ENCODE measurements at regions of chr19 and their contacts with region 1.

Region 1: DNA sequence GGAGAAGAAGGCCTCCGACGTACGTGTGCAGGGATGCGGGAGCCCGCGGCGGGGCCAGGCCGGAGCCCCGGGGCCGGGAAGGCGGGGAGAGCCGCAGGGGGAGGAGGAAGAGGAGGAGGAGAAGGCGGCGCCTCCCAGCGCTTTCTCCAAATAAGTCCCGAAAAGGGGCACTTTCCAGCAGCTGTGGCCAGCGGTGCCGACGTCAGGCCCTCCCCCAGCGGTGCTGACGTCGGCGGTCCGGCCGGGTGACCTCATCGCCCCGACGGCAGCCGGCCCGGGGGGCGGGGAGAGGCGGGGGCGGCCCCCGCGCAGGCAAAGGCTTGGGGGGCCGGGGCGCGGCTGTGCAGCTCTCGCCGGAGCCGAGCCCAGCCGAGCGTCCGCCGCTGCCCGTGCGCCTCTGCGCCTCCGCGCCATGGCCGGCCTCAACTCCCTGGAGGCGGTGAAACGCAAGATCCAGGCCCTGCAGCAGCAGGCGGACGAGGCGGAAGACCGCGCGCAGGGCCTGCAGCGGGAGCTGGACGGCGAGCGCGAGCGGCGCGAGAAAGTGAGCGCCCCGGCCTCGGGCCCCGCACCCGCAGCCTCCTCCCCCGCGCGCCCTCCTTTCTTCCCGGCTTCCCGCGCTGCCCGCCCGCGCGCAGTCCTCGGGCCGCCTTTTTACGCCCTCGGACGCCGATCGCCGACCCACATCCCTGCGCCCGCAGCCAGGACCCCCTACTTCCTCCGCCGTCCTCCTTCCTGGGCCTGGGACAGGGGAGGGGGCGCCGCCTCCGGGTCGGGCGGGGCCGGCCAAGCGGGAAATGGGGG is at the start of gene TPM4:
- DNase-seq: peak; percentile 89
- ATAC-seq: peak; percentile 76
- H3K4me3 Mint-ChIP-seq: peak within 1 kb of the TSS; percentile 85
- H3K27ac Mint-ChIP-seq: peak within 1 kb of the TSS; percentile 98
- H3K4me1 Mint-ChIP-seq: peaks cover 56% of the 10 kb centered on the region
- H3K27me3 Mint-ChIP-seq: no peaks in the 10 kb centered on the region
- CTCF ChIP-seq: no peak
- total RNA-seq, gene TPM4: 302 to 327 TPM (median 323 TPM) in 3 replicates

Region 2: GRCh38 chr19:16018801-16019551 is 57.4 kb before region 1 on chr19:
- CTCF ChIA-PET with region 1: no interaction called
- POLR2A ChIA-PET with region 1: no interaction called
- DNase-seq: no peak
- ATAC-seq: no peak
- H3K4me3 Mint-ChIP-seq: no peak overlapping the region
- H3K27ac Mint-ChIP-seq: no peak overlapping the region
- H3K4me1 Mint-ChIP-seq: no peaks in the 10 kb centered on the region
- H3K27me3 Mint-ChIP-seq: no peaks in the 10 kb centered on the region
- CTCF ChIP-seq: no peak

Region 3: DNA sequence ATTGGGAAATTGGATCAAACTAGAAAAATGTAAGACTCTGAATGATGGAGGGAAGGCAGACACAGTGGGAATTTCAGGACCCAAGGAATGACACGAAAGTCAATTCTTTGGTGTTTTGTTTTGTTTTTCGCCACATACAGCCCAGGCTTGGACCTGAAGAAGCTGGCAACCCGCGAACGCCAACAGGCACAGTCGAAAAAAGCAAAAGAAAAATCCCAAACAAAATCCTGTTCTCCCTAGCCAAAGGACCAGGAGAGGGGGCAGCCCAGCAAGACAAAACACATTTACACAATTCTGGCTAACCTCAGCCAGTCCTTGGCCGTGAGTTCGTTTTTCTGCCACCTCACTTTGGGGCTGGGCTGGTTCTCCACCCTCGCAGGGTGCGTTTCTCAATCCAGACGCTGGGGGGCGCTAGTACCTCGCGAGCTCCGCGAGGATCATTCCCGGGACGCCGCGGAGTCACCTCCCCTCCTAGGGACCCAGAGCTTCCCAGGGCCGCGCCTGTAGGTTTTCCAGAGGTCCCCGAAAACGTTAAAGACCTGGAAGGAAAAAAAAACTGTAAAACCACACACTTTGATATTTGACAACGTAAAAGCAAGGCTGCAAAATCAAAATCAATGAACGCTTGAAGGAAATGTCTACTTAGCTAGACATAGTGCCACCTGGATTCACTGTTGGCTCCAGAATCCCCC is 34.9 kb before region 1 on chr19:
- CTCF ChIA-PET with region 1: interaction called, 19 read pairs
- POLR2A ChIA-PET with region 1: interaction called, 9 read pairs
- DNase-seq: peak; percentile 93
- ATAC-seq: peak; percentile 96
- H3K4me3 Mint-ChIP-seq: peak overlapping the region; percentile 38
- H3K27ac Mint-ChIP-seq: no peak overlapping the region
- H3K4me1 Mint-ChIP-seq: 0 out of 2 replicates have a peak, but pooled peaks cover 3% of the 10 kb centered on the region
- H3K27me3 Mint-ChIP-seq: peaks cover 8% of the 10 kb centered on the region
- CTCF ChIP-seq: peak; percentile 97

Region 4: GRCh38 chr19:16088351-16089009 is 12.1 kb after region 1 on chr19:
- CTCF ChIA-PET with region 1: no interaction called
- POLR2A ChIA-PET with region 1: interaction called, 10 read pairs
- DNase-seq: no peak
- ATAC-seq: no peak
- H3K4me3 Mint-ChIP-seq: no peak overlapping the region
- H3K27ac Mint-ChIP-seq: peak overlapping the region; percentile 49; the same call in 1 of the 2 replicates
- H3K4me1 Mint-ChIP-seq: no peaks in the 10 kb centered on the region
- H3K27me3 Mint-ChIP-seq: no peaks in the 10 kb centered on the region
- CTCF ChIP-seq: no peak

Region 5: GRCh38 chr19:16111160-16111908 is 35.0 kb after region 1 on chr19 and contains the start of gene RAB8A:
- CTCF ChIA-PET with region 1: interaction called, 10 read pairs
- POLR2A ChIA-PET with region 1: interaction called, 17 read pairs
- DNase-seq: peak; percentile 97
- ATAC-seq: peak; percentile 95
- H3K4me3 Mint-ChIP-seq: peak within 1 kb of the TSS; percentile 96
- H3K27ac Mint-ChIP-seq: peak within 1 kb of the TSS; percentile 96
- H3K4me1 Mint-ChIP-seq: peaks cover 13% of the 10 kb centered on the region
- H3K27me3 Mint-ChIP-seq: peaks cover 2% of the 10 kb centered on the region; the same call in 1 of the 2 replicates
- CTCF ChIP-seq: peak; percentile 86
- total RNA-seq, gene RAB8A: 68.4 to 81.8 TPM (median 74.0 TPM) in 3 replicates

Region 6: DNA sequence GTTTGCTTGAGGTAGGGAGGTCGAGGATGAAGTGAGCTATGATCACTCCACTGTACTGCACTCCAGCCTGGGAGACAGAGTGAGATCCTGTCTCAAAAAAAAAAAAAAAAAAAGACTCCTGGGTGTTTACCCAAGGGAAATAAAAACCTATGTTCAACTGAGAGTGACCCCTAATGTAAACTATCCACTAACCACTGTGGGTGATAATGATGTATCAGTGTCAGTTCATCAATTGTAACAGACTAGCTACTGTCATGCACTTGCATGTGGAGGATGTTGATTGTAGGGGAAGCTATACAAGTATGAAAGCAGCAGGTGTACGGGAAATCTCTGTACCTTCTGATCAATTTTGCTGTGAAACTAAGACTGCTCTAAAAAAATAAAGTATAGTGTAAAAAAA is 99.6 kb after region 1 on chr19:
- CTCF ChIA-PET with region 1: no interaction called
- POLR2A ChIA-PET with region 1: no interaction called
- DNase-seq: no peak
- ATAC-seq: no peak
- H3K4me3 Mint-ChIP-seq: no peak overlapping the region
- H3K27ac Mint-ChIP-seq: no peak overlapping the region
- H3K4me1 Mint-ChIP-seq: no peaks in the 10 kb centered on the region
- H3K27me3 Mint-ChIP-seq: peaks cover 7% of the 10 kb centered on the region
- CTCF ChIP-seq: no peak

Region 7: GRCh38 chr19:16324384-16325160 is 248.2 kb after region 1 on chr19 and contains the start of gene KLF2:
- CTCF ChIA-PET with region 1: no interaction called
- POLR2A ChIA-PET with region 1: no interaction called
- DNase-seq: peak; percentile 71
- ATAC-seq: peak; percentile 52
- H3K4me3 Mint-ChIP-seq: peak within 1 kb of the TSS; percentile 41
- H3K27ac Mint-ChIP-seq: no peak within 1 kb of the TSS
- H3K4me1 Mint-ChIP-seq: 0 out of 2 replicates have a peak, but pooled peaks cover 5% of the 10 kb centered on the region
- H3K27me3 Mint-ChIP-seq: peaks cover 75% of the 10 kb centered on the region
- CTCF ChIP-seq: no peak
- total RNA-seq, gene KLF2: 0.82 to 1.1 TPM (median 1.0 TPM) in 3 replicates